ENCODE measurements at regions of chr11 and their contacts with region 1.

Region 1: DNA sequence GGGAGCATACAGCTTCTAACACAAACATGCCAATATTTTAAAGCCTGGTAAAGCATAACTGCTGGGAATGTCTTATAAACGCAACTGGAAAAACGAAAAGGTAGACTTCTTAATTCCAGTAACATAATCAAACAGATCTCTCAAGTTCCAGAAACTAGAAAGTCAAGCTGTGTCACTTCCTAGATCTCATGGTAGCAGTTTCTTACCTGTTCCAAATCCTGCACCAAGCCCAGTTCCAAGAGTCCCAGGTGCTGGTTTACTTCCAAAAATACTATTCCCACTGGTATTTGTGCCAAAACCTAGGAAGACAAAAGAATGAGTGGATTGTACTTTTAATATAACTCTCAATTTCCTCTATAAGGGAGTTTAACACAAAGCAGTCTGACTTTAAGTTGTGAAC is 44.2 kb downstream of the NUP98 start:
- DNase-seq: no peak
- H3K4me3 ChIP-seq: no peak overlapping the region
- H3K27ac ChIP-seq: no peak overlapping the region
- H3K4me1 ChIP-seq: peaks cover 5% of the 10 kb centered on the region
- H3K27me3 ChIP-seq: no peaks in the 10 kb centered on the region
- CTCF ChIP-seq: no peak

Region 2: DNA sequence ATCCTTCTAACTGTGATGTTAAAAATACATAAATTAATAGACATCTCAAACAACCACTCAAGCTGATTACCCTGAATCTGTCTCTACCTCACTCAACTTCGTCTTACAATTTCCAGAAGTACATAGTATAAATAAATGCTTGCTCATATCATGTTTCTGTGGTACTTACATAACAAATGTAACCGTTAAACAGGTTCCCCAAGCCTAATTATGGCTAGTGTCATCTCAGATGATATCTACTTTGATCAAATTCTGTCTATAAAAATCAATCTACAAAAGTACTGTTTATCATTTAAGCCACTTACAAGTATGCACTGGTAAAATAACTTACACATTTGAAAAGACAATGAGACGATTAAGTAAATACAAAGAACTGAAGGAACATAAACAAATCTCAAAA is 53.7 kb before region 1 on chr11:
- CTCF ChIA-PET with region 1: no interaction called
- dilution Hi-C with region 1: no loop called
- in situ Hi-C with region 1: loop called in 1 of 2 experiments (anchors 10 kb)
- intact Hi-C with region 1: no loop called
- DNase-seq: no peak
- H3K4me3 ChIP-seq: no peak overlapping the region
- H3K27ac ChIP-seq: no peak overlapping the region
- H3K4me1 ChIP-seq: no peaks in the 10 kb centered on the region
- H3K27me3 ChIP-seq: no peaks in the 10 kb centered on the region
- CTCF ChIP-seq: no peak